ENCODE measurements at regions of chr11 and their contacts with region 1.

Region 1: DNA sequence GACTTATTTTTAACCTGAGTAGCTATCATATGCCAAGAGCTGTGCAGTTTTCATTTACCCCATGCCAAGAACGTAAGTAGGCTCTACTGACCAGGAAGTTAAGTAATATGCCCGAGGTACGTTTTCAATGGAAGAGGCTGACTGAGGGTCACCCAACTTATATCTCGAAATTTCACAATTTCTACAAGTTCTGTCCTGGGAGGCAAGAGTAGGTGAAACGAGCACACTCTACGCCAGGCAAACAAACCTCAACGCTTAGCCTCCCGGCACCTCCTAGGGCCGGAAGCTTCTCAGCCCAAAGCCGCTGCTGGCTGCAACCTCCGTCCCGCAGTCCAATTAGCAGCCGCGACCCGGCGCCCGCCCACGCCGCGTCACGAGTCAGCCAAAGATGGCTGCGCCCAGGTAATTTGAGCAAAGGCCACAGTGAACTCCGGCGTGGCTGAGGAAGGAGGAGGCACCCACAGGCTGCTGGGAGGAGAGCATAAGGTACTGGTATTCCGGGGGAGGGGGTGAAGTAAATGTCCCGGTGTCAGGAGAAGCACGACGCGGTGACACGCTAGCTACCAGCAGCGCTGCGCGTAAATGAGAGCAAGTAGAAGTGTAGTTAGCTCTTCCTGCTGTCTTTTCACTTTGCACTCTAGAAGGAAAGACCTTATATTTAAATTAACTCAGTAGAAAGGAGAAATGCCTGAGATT is at the start of gene TMEM126A:
- DNase-seq: peak; percentile 50
- H3K4me3 ChIP-seq: peak within 1 kb of the TSS; percentile 85
- H3K27ac ChIP-seq: peak within 1 kb of the TSS; percentile 52
- H3K27me3 ChIP-seq: peaks cover 8% of the 10 kb centered on the region
- CTCF ChIP-seq: no peak
- polyA plus RNA-seq, gene TMEM126A: 65.2 and 104 TPM in 2 replicates

Region 2: DNA sequence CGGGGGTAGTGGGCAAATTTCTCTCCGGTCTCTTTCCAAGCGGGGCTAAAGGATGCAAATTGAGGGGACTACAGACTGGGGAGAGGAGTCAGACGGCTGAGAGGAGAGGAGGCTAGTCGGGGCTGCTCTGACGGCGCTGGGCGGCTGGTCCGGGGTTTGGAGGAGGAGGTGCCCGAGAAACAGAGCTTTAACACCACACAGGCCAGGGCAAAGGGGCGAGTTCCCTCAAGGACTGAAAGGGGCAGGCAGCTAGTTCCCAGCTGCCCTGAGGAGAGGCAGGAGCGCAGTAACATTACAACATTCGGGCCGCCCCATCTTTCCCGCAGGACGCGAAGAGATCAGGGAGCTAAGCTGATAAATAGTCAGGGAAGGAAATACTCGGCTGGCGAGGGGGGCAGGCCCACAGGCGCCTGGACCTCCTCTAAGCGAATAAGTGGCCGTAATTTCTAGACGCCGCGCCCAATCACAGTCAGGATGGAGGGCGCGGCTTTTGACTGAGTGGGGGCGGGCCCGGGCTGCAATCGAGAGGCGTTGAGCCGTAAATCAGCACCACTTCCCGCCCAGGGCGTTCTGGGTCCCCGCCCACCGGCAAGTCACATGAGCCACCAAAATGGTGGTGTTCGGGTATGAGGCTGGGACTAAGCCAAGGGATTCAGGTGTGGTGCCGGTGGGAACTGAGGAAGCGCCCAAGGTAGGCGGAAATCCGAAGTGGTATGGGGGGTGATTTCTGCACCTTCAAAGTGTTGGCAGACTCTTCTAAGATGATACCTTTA is 19.6 kb before region 1 on chr11 and contains the start of gene TMEM126B:
- CTCF ChIA-PET with region 1: no interaction called
- POLR2A ChIA-PET with region 1: interaction called, 18 read pairs
- DNase-seq: peak; percentile 86
- H3K4me3 ChIP-seq: peak within 1 kb of the TSS; percentile 90
- H3K27ac ChIP-seq: peak within 1 kb of the TSS; percentile 80
- H3K27me3 ChIP-seq: no peaks in the 10 kb centered on the region
- CTCF ChIP-seq: no peak
- polyA plus RNA-seq, gene TMEM126B: 59.0 and 86.2 TPM in 2 replicates

Region 3: DNA sequence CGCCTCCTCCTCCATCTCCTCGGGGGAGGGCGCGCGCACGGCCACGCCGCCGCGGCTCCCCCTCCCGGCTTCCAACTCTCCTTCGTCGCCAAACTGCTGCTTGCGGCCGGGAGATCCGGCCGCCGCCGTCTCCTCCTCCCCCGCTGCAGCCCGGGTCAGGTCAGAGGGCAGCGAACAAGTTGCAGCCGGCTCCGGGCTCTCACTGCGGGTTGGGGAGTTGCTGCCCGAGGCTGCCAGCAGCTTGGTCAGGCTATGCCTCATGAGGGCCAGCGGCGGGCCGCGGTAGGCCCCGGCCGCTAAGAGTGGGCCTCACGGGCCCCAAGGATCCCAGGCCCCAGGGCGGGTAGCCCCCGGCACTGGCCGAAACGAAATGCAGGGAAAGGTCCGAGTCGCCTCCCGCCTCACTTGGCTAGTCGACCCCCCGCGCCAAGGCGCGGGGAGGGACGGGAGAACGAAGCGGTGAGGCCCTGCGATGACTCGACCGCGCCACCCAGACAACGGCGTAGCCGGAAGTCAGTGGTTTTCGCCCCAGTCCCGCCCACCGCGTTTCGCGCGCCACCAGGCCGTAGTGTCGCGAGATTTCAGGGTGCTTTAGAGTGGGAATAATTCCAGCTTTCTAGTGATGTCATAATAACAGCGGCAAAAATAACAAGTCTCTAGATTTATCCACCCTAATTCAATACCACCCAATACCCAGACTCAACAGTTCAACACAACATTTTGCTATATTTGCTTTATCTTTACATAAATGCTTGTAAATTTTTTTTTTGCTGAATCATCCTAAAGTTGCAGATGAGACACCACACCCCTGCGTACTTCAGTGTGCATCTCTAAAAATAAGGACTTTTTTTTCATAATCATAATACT is 17.1 kb after region 1 on chr11 and contains the start of gene CREBZF:
- CTCF ChIA-PET with region 1: no interaction called
- POLR2A ChIA-PET with region 1: interaction called, 19 read pairs
- DNase-seq: peak; percentile 87
- H3K4me3 ChIP-seq: peak within 1 kb of the TSS; percentile 91
- H3K27ac ChIP-seq: peak within 1 kb of the TSS; percentile 97
- H3K27me3 ChIP-seq: no peaks in the 10 kb centered on the region
- CTCF ChIP-seq: no peak
- polyA plus RNA-seq, gene CREBZF: 19.3 and 25.0 TPM in 2 replicates